Activated CD4-positive, alpha-beta memory T cell treated with anti-CD3 and anti-CD28 coated beads, Interleukin-2, amount 10 ng/mL, durations not matched to agents 7 days and 5 days (primary cell): ENCODE measurements at regions of chr11 and their contacts with region 1.

Region 1: DNA sequence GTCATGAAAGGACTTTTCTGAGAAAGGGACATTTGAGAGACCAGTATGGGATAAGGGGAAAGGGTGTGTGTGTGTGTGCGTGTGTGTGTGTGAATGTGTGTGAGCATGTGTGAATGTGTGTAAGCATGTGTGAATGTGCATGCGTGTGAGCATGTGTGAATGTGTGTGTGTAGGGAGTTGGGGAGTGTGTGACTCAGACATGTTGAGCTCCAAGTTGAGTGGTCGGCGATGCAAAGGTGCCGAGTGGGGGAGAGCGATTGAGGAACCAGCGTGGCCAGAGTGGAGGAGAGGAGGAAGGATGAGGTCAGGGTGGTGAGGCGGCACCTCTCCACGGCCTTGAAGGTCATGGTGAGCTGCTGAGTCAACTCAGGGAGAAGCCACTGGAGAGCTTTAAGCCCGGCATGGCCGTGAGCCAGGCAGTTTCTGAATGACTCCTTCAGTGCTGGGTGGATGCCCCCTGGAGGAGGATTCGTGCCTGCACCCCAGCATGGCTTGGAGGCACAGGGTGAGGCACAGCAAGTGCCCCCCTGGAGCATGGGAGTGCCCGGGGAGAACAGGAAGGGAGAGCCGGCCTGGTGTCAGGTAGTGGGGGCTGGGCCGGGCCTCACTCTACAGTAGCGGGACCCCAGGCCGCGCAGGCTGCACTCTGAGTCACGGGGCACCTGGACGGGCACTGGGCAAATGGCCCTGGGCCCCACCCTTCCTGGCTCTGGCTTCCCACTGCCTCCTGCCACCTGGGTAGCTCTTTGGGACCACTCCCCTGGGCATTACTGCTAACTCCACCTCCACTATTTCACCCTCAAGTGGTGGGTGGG is 8.2 kb upstream of the CCDC88B start:
- DNase-seq: peak; percentile 89
- H3K4me3 Mint-ChIP-seq: peak overlapping the region; percentile 45
- H3K27ac Mint-ChIP-seq: peak overlapping the region; percentile 83
- H3K4me1 Mint-ChIP-seq: peaks cover 44% of the 10 kb centered on the region
- H3K27me3 Mint-ChIP-seq: no peaks in the 10 kb centered on the region

Region 2: DNA sequence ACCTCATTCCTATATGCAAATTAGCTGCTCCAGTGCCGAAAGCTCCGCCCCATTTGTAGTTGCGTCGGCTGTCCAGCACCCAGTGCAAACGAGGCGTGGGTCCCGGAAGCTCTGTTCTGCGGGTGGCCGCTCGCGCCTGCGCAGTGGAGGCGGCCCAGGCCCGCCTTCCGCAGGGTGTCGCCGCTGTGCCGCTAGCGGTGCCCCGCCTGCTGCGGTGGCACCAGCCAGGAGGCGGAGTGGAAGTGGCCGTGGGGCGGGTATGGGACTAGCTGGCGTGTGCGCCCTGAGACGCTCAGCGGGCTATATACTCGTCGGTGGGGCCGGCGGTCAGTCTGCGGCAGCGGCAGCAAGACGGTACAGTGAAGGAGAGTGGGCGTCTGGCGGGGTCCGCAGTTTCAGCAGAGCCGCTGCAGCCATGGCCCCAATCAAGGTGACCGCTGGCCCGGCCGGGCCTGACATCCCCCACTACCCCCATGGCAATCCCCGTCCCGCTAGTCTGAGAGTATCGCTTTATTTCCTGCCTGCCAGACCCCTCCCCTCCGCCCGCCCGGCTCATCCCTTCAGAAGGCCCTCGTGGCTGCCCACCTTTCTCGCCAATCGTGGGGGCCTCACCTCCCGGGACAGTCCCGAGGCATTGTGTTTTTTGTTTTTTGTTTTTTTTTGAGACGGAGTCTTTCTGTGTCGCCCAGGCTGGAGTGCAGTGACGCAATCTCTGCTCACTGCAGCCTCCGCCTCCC is 13.6 kb before region 1 on chr11 and contains the start of gene PRDX5:
- CTCF ChIA-PET with region 1: interaction called, 157 read pairs
- POLR2A ChIA-PET with region 1: interaction called, 104 read pairs
- DNase-seq: peak; percentile 96
- H3K4me3 Mint-ChIP-seq: peak within 1 kb of the TSS; percentile 91
- H3K27ac Mint-ChIP-seq: peak within 1 kb of the TSS; percentile 96
- H3K4me1 Mint-ChIP-seq: peaks cover 53% of the 10 kb centered on the region
- H3K27me3 Mint-ChIP-seq: no peaks in the 10 kb centered on the region
- total RNA-seq, gene PRDX5: 137 to 139 TPM